Naive thymus-derived CD4-positive, alpha-beta T cell (primary cell): ENCODE measurements at regions of chr1 and their contacts with region 1.

Region 1: GRCh38 chr1:100351095-100351891 is 1.0 kb upstream of the CDC14A start:
- DNase-seq: peak; percentile 73 to 91 (median 85)
- ATAC-seq: peak; percentile 82
- H3K4me3 ChIP-seq: peak overlapping the region; percentile 94
- H3K4me3 Mint-ChIP-seq: peak overlapping the region; percentile 89 to 100 (median 98)
- H3K27ac ChIP-seq: peak overlapping the region; percentile 89
- H3K27ac Mint-ChIP-seq: peak overlapping the region; percentile 95 to 100 (median 98)
- H3K4me1 ChIP-seq: peaks cover 10 to 19% of the 10 kb centered on the region in 2 donors
- H3K4me1 Mint-ChIP-seq: peaks cover 23 to 35% (median 26%) of the 10 kb centered on the region in 7 donors
- H3K27me3 ChIP-seq: no peaks in the 10 kb centered on the region
- H3K27me3 Mint-ChIP-seq: peaks cover 0 to under 1% (median 0%) of the 10 kb centered on the region in 5 donors

Region 2: DNA sequence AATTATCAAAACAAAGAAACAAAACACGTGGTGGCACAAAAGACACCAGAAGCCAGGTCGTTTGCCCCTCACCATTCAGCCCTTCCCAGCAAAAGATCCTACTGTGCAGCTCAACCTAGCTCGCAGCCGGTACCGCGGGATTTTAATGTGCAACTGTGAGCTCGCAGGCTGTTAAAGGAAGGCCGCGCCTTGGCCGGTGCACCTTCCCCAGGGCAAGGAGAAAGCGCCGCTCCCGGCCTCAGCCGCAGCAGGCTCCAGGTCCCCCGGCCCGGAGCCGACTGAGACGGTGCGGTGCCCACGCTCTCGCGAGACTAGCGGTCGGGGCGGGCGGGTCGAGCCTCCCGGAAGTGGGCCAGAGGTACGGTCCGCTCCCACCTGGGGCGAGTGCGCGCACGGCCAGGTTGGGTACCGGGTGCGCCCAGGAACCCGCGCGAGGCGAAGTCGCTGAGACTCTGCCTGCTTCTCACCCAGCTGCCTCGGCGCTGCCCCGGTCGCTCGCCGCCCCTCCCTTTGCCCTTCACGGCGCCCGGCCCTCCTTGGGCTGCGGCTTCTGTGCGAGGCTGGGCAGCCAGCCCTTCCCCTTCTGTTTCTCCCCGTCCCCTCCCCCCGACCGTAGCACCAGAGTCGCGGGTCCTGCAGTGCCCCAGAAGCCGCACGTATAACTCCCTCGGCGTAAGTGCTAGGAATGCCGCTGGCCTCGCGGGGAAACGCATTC is 501.4 kb before region 1 on chr1 and contains the start of gene AGL:
- CTCF ChIA-PET with region 1: no interaction called
- POLR2A ChIA-PET with region 1: no interaction called
- intact Hi-C with region 1: loop called in 1 of 2 experiments (anchors 2 kb)
- DNase-seq: peak; percentile 76 to 88 (median 86)
- ATAC-seq: peak; percentile 97
- H3K4me3 ChIP-seq: peak within 1 kb of the TSS; percentile 81
- H3K4me3 Mint-ChIP-seq: peak within 1 kb of the TSS; percentile 89 to 99 (median 96)
- H3K27ac ChIP-seq: peak within 1 kb of the TSS; percentile 75
- H3K27ac Mint-ChIP-seq: peak within 1 kb of the TSS; percentile 86 to 98 (median 96)
- H3K4me1 ChIP-seq: peaks cover 7 to 10% of the 10 kb centered on the region in 2 donors
- H3K4me1 Mint-ChIP-seq: peaks cover 20 to 42% (median 37%) of the 10 kb centered on the region in 7 donors
- H3K27me3 ChIP-seq: no peaks in the 10 kb centered on the region
- H3K27me3 Mint-ChIP-seq: no peaks in the 10 kb centered on the region
- total RNA-seq, gene AGL: 11.5 to 20.1 (median 12.5) TPM

Region 3: DNA sequence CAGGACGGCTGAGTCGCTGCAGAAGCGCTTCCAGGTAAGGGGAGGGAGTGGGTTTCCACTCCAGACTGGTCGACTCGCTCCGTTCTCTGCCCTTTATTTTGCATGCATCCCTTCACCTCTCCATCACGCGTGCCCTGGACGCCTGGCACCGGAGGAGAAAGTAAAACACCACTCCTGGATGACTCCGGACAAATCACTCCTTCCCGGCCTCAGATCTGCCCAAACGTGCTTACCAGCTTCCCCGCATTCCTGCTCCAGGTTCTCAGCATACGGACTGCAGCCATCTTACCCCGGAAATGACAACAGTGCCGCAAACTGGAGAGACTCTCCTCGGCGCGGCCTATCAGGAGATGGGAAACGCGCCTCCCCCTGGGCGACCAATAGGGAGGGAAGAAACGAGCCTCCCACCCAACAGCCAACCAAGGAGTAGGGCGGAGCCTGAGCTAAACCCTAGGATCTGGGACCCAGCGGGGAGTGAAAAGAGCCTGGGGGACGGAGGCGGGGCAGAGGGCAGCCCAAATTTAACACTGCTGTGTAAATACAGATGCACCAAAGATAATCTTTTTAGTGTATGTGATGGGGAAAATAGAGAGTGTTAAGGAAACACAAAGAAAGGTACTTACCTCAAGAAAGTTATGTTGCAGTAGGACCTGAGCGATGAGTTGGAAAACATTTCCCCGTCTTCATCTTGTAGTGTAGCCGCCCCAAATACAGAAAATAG is 101.6 kb before region 1 on chr1 and contains the start of gene DBT:
- CTCF ChIA-PET with region 1: no interaction called
- POLR2A ChIA-PET with region 1: interaction called, 11 read pairs
- intact Hi-C with region 1: loop called (anchors 1 kb)
- DNase-seq: peak; percentile 64 to 93 (median 88)
- ATAC-seq: peak; percentile 100
- H3K4me3 ChIP-seq: peak within 1 kb of the TSS; percentile 82
- H3K4me3 Mint-ChIP-seq: peak within 1 kb of the TSS in 1 of 10 donors; percentile 30
- H3K27ac ChIP-seq: peak within 1 kb of the TSS; percentile 79
- H3K27ac Mint-ChIP-seq: peak within 1 kb of the TSS in 2 of 9 donors; percentile 22 to 26
- H3K4me1 ChIP-seq: peaks cover 7 to 23% of the 10 kb centered on the region in 2 donors
- H3K4me1 Mint-ChIP-seq: peaks cover 9 to 24% (median 19%) of the 10 kb centered on the region in 7 donors
- H3K27me3 ChIP-seq: no peaks in the 10 kb centered on the region
- H3K27me3 Mint-ChIP-seq: peaks cover 0 to 8% (median 0%) of the 10 kb centered on the region in 5 donors
- total RNA-seq, gene DBT: 9.2 to 18.4 (median 9.7) TPM

Region 4: GRCh38 chr1:100299521-100300222 is 51.6 kb before region 1 on chr1:
- CTCF ChIA-PET with region 1: no interaction called
- POLR2A ChIA-PET with region 1: interaction called, 3 read pairs
- intact Hi-C with region 1: loop called in 1 of 2 experiments (anchors 5 kb)
- DNase-seq: no peak
- ATAC-seq: no peak
- H3K4me3 ChIP-seq: no peak overlapping the region
- H3K4me3 Mint-ChIP-seq: no peak overlapping the region
- H3K27ac ChIP-seq: no peak overlapping the region
- H3K27ac Mint-ChIP-seq: no peak overlapping the region
- H3K4me1 ChIP-seq: peaks cover 0 to 5% of the 10 kb centered on the region in 2 donors
- H3K4me1 Mint-ChIP-seq: peaks cover 0 to 4% (median 0%) of the 10 kb centered on the region in 7 donors
- H3K27me3 ChIP-seq: no peaks in the 10 kb centered on the region
- H3K27me3 Mint-ChIP-seq: no peaks in the 10 kb centered on the region

Region 5: GRCh38 chr1:100400404-100400803 is 49.1 kb after region 1 on chr1:
- CTCF ChIA-PET with region 1: interaction called, 18 read pairs
- POLR2A ChIA-PET with region 1: interaction called, 196 read pairs
- intact Hi-C with region 1: loop called (anchors 1 kb)
- DNase-seq: peak in 8 of 9 donors; percentile 23 to 89 (median 84)
- ATAC-seq: peak; percentile 87
- H3K4me3 ChIP-seq: peak overlapping the region; percentile 46
- H3K4me3 Mint-ChIP-seq: peak overlapping the region; percentile 69 to 89 (median 81)
- H3K27ac ChIP-seq: peak overlapping the region; percentile 72
- H3K27ac Mint-ChIP-seq: peak overlapping the region; percentile 83 to 98 (median 96)
- H3K4me1 ChIP-seq: peaks cover 77 to 87% of the 10 kb centered on the region in 2 donors
- H3K4me1 Mint-ChIP-seq: peaks cover 59 to 98% (median 86%) of the 10 kb centered on the region in 7 donors
- H3K27me3 ChIP-seq: no peaks in the 10 kb centered on the region
- H3K27me3 Mint-ChIP-seq: no peaks in the 10 kb centered on the region

Region 6: DNA sequence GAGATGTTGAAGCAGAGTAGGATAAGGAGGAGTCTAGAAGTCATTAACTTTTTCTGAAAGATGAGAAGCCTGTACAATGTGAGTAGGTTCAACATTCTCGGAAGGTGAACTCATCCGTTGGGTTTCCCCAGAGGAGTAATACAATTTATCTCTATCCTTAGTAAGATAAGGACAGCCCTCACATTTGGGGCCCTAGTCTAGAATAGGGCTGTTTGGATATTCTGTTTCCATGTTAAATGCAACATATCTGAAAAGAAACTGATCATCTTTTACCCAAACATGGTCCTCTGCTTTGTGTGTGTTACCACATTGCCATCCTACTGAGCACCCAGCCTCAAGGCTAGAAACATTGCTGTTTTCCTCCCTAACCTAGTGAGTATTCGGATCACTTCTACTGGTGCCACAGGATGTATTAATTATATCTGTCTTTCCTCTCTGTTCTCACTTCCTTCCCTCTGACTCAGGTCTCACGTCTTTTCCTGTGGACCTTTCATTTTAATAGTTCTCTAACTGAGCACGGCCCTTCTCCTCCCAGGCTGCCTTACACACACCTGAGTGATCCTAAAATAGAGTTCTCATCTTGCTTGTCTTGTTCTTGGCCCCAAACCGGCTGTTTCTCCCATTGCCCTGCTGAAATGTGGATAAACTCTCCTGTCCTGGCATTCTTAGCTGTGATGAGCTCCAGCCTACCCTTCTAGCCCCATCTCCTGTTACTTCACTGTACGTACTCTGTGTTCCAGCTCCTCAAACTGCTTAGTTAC is 92.7 kb after region 1 on chr1:
- CTCF ChIA-PET with region 1: interaction called, 4 read pairs
- POLR2A ChIA-PET with region 1: interaction called, 29 read pairs
- intact Hi-C with region 1: loop called (anchors 1 kb)
- DNase-seq: peak in 5 of 9 donors; percentile 31 to 42 (median 36)
- ATAC-seq: peak; percentile 6
- H3K4me3 ChIP-seq: peak overlapping the region; percentile 12
- H3K4me3 Mint-ChIP-seq: peak overlapping the region; percentile 66 to 86 (median 81)
- H3K27ac ChIP-seq: peak overlapping the region; percentile 93
- H3K27ac Mint-ChIP-seq: peak overlapping the region; percentile 92 to 99 (median 98)
- H3K4me1 ChIP-seq: peaks cover 83 to 84% of the 10 kb centered on the region in 2 donors
- H3K4me1 Mint-ChIP-seq: peaks cover 53 to 95% (median 87%) of the 10 kb centered on the region in 7 donors
- H3K27me3 ChIP-seq: no peaks in the 10 kb centered on the region
- H3K27me3 Mint-ChIP-seq: no peaks in the 10 kb centered on the region

Region 7: DNA sequence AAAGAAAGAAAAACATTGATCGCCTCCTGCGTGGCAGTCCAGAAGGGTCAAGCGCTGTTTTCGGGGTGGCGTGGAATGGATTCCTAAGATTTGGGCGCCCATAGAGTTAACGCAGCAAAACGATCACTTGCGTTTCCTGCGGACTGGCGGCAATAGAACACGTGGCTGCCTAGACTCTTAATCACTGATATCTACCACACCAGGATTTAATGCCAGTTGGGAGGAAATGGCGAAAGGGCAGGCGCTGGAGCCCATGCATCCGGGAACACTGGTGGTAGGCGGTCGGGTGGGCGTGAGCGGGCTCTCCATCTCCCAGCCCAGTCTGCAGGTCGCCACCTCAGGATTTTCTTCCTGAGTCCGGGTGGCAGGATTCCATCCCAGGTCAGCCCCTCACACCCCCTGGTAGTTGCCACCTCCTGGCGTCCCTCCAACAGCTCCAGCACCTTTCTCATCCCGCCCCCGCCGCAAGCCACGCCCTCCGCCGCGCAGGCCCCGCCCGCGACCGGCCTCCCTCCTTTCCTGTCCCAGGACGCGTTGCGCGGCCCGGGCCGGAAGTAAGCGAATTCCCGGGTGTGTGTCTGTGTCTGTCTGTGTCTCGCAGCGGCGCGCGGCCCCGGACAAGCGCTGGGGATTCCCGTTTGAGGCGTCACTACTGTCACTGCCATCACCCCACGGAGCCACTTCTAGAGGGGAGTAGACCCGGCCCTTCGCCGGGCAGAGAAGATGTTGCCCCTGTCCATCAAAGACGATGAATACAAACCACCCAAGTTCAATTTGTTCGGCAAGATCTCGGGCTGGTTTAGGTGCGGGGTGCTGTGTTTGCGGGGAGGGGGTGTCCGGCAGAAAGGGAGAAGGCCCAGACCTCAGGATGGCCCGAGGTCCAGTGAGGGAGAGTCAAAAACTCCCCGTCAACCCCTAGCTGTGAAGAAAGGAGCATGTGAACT is 544.5 kb after region 1 on chr1 and contains the start of gene SLC30A7:
- CTCF ChIA-PET with region 1: no interaction called
- POLR2A ChIA-PET with region 1: interaction called, 3 read pairs
- intact Hi-C with region 1: loop called (anchors 1 to 2 kb)
- DNase-seq: peak; percentile 93 to 99 (median 94)
- ATAC-seq: peak; percentile 90
- H3K4me3 ChIP-seq: peak within 1 kb of the TSS; percentile 96
- H3K4me3 Mint-ChIP-seq: peak within 1 kb of the TSS; percentile 91 to 100 (median 99)
- H3K27ac ChIP-seq: peak within 1 kb of the TSS; percentile 95
- H3K27ac Mint-ChIP-seq: peak within 1 kb of the TSS; percentile 95 to 100 (median 99)
- H3K4me1 ChIP-seq: peaks cover 7 to 10% of the 10 kb centered on the region in 2 donors
- H3K4me1 Mint-ChIP-seq: peaks cover 17 to 58% (median 50%) of the 10 kb centered on the region in 7 donors
- H3K27me3 ChIP-seq: no peaks in the 10 kb centered on the region
- H3K27me3 Mint-ChIP-seq: no peaks in the 10 kb centered on the region
- total RNA-seq, gene SLC30A7: 29.9 to 44.5 (median 38.8) TPM